Right ventricle myocardium inferior (tissue), 1 donor: ENCODE measurements at regions of chr5 and their contacts with region 1.

Region 1: DNA sequence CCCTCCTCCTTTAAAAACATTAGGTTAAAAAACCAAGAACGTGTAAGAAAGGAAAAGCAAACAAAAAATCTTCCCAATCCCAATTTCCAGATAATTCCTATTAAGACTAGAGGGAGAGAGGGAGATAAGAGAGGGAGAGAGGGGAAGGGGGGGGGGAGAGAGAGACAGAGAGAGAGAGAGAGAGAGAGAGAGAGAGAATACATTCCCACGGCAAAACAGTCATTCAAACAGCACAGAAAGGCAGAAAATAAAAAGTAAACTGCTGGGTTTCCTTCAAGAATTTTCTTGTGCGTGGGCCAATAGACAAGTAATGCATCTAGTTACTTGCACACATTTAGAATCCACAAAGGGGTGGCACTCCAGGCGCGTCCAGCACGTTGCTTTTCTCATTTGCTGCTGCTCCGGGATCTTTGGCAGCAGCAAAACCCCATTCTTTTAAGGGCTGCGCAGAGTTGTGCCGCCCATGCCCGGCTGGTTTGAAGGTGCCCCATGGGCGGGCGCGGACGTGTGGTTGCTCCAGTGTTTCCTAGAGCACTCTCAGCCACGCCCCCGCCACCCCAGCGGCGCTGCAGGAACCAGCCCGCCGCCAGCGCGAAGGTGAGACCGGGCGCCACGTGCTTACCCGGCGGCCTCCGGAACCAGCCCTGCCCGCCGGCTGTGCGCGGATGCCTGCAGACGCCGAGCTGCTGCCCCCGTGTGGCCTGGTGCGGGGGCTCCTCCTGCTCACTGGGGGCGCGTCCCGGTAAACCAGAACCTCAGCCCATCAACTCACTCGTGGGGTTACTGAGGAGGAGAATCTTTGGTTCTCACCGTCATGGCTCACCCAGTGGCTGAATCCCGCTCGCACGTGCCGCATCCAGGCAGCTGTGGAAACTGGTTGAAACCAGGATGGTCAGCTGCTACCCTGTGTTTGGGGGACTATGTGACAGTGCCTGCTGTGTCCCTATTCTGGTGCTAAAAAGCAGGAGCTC is 44.6 kb downstream of the STC2 start:
- DNase-seq: peak; percentile 88
- ATAC-seq: peak; percentile 91

Region 2: DNA sequence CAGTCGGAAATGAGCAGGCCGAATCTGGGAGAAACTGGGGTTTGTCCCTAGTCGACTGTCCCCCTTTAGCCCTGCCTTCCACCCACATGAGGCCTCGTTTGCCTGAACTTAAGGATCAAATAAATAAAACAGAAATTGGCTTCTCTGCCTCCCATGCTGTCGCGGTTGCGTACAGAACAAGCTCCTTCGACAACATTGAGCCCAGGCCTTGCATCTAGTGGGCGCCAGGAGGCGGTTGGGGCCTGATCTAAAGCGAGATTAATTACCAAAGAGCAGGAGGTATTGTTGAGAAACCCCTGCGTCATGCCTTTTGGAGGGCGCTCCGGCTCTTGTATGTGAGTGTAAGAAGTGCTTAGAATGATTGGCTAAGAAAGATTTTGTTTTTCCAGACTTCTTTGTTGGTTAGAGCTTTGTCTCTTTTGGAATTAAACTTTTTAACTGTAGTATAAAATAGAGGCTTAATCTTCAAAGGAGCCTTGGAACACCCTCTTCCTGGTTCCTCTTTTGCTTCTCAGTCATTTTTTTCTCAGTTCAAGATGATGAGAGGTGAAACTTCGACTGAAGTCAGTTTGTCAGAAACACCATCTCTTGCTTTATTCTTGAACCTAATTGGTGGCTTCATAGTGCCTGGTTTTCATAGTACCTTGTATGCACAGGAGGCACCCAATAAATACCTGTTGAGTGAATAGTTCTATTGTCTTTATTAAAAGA is 299.2 kb before region 1 on chr5:
- intact Hi-C with region 1: loop called (anchors 5 kb)
- DNase-seq: peak; percentile 88
- ATAC-seq: peak; percentile 50

Region 3: DNA sequence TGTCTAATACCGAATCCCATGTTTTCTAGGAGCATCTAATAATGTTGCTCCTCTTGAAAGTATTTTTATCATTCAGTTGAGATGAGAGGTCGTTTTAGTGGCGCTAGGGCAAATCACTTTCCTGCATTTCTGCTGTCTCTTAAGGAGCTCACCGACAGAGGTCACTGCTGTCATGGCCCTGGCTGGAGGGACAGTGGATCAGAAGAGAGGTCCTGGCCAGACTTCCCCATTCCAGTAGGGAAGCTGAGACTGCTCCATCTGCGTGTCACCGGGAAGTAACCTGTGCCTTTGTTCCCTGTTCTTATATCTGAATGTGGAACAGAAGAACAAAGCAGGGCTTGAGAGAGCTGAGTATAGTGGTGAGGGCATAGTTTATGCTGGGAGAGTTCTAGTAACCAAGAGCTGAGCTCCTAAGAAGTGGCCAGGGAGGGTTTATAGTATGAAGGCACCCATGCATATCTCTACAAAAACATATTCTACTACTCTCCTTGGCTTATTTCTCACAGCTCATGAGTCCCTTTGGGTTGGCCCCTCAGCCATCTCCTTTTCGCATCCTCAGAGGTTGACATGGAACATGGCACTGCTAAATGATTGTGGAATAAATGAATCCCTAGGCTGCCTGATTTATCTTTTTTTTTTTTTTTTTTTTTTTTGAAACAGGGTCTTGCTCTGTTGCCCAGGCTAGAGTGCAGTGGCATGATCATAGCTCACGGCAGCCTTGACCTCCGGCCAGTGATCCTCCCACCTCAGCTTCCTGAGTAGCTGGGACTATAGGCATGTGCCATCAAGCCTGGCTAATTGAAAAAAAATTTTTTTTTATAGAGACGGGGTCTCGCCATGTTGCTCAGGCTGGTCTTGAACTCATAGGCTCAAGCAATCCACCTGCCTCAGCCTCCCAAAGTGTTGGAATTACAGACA is 272.8 kb before region 1 on chr5:
- intact Hi-C with region 1: loop called (anchors 5 kb)
- DNase-seq: no peak
- ATAC-seq: peak; percentile 93

Region 4: GRCh38 chr5:173204185-173204979 is 79.2 kb before region 1 on chr5:
- intact Hi-C with region 1: no loop called
- DNase-seq: no peak
- ATAC-seq: no peak

Region 5: GRCh38 chr5:173884402-173885061 is 600.9 kb after region 1 on chr5:
- intact Hi-C with region 1: no loop called
- DNase-seq: no peak
- ATAC-seq: no peak